Right lobe of liver (tissue), 6 donors: ENCODE measurements at regions of chr2 and their contacts with region 1.

Region 1: GRCh38 chr2:20225294-20226151 is 593 bp upstream of the SDC1 start:
- DNase-seq: peak; percentile 82 to 93 (median 92)
- ATAC-seq: peak; percentile 68 to 86 (median 77)
- H3K4me3 ChIP-seq: peak overlapping the region; percentile 85 to 93 (median 85)
- H3K27ac ChIP-seq: peak overlapping the region; percentile 90 to 99 (median 92)
- H3K4me1 ChIP-seq: peaks cover 0 to 32% (median 14%) of the 10 kb centered on the region in 4 donors
- H3K27me3 ChIP-seq: no peaks in the 10 kb centered on the region
- CTCF ChIP-seq: peak; percentile 52 to 63 (median 60)
- POLR2A ChIP-seq: no peak

Region 2: DNA sequence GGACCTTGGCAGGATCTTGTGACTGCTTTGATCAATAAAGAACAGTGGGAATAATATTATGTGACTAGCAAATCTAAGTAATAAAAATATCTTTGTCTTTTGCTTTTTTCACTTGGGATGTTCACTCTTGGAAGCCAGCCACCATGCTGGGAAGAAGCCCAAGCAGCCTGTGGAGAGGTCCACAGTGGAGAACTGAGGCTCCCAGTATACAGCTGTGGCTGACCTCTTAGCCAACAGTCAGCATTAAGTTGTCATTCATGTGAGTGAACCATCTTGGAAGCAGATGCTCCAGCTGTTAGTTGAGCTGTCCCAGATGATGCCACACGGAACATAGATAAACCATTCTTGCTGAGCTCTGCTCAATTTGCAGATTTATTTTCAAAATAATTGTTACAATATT is 1027.1 kb before region 1 on chr2:
- intact Hi-C with region 1: no loop called
- DNase-seq: no peak
- ATAC-seq: no peak
- H3K4me3 ChIP-seq: no peak overlapping the region
- H3K27ac ChIP-seq: no peak overlapping the region
- H3K4me1 ChIP-seq: no peaks in the 10 kb centered on the region
- H3K27me3 ChIP-seq: no peaks in the 10 kb centered on the region
- CTCF ChIP-seq: no peak
- POLR2A ChIP-seq: no peak

Region 3: DNA sequence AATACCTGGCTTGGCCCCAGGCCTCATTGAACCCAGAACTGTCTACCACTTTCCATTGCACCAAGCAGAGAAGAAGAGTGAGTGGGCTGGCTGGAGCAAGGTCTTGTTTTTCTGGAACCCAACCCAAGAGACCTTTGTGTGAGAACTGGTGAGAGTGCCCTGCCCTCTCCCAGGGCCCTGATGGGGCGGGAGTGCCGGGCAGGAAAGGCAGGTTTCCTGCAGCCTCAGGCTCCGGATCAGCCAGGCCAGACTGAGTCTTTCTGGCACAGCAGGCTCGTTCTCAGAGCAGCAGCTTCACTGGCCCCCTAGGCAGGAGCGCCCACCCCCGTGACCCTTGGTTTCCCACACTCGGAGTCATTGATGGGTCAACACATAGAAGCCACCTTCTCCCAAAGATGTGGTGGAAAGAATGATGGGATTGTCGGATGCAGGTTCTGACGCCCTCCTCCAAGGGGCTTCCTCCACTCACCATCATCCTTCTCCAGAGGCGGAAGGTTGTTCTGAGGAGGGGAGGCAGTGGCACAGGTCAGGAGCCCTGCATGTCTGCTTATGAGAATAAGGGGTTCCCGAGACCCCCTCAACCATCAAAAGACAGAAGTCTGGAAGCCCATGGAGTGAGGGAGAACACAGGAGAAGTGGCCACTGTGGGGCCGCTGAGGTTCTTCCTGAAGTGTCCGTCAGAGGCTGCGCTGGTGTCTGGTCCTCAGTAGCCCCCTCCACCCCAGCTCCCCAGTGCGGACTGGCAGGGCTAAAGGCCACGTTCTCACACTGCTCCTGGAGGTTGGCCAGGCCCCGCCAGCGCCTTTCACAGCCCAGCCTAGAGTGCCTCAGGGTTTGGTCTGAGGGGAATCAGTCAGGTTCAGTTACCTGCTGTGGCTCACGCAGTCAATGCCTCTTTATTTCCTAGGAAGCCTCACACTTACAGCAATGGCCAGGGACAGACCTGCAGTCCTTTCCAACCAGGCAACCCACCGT is 111.3 kb before region 1 on chr2:
- intact Hi-C with region 1: loop called in 1 of 2 experiments (anchors 10 kb)
- DNase-seq: peak in 1 of 3 donors; percentile 57
- ATAC-seq: peak; percentile 37 to 57 (median 50)
- H3K4me3 ChIP-seq: no peak overlapping the region
- H3K27ac ChIP-seq: no peak overlapping the region
- H3K4me1 ChIP-seq: peaks cover 0 to 2% (median under 1%) of the 10 kb centered on the region in 4 donors
- H3K27me3 ChIP-seq: no peaks in the 10 kb centered on the region
- CTCF ChIP-seq: no peak
- POLR2A ChIP-seq: no peak